Common myeloid progenitor, CD34-positive (primary cell): ENCODE measurements at regions of chr11 and their contacts with region 1.

Region 1: DNA sequence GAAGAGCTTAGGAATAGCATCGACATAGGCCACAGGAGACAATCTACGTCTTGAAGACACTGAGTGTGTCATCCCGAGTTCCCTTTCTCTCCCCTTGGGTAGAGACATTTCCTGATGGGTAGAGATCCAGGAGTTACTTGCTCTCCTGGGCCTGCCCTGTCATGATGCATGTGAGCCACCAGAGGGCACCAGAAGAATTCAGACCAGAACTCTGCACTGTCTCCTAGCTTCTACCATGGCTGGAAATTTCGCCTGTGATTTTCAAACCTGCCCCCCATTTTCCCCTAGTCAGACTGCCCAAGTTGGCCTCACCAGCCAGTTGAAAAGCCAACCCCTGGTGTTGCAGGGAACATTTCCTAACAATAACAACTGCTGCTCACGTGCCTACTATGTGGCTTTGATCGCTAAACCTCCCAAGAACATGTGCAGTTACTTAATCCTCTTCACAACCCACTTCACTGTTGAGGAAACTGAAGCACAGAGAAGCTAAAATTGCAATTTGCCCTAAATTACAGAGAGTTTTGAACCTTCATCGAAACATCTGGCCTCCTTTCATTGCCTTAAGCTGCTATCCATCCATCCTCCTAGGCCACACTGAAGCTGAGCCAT is 47.2 kb downstream of the C11orf58 start:
- DNase-seq: peak; percentile 56 to 76 (median 70)
- H3K4me3 ChIP-seq: no peak overlapping the region
- H3K27ac ChIP-seq: no peak overlapping the region
- H3K4me1 ChIP-seq: peaks cover 0 to 13% (median 10%) of the 10 kb centered on the region in 4 experiments
- H3K27me3 ChIP-seq: no peaks in the 10 kb centered on the region

Region 2: GRCh38 chr11:16737818-16738192 is 47.8 kb before region 1 on chr11:
- CTCF ChIA-PET with region 1: no interaction called
- POLR2A ChIA-PET with region 1: no interaction called
- DNase-seq: no peak
- H3K4me3 ChIP-seq: peak overlapping the region; percentile 60 to 99 (median 94)
- H3K27ac ChIP-seq: peak overlapping the region; percentile 100
- H3K4me1 ChIP-seq: peaks cover 7 to 16% (median 12%) of the 10 kb centered on the region in 4 experiments
- H3K27me3 ChIP-seq: no peaks in the 10 kb centered on the region

Region 3: DNA sequence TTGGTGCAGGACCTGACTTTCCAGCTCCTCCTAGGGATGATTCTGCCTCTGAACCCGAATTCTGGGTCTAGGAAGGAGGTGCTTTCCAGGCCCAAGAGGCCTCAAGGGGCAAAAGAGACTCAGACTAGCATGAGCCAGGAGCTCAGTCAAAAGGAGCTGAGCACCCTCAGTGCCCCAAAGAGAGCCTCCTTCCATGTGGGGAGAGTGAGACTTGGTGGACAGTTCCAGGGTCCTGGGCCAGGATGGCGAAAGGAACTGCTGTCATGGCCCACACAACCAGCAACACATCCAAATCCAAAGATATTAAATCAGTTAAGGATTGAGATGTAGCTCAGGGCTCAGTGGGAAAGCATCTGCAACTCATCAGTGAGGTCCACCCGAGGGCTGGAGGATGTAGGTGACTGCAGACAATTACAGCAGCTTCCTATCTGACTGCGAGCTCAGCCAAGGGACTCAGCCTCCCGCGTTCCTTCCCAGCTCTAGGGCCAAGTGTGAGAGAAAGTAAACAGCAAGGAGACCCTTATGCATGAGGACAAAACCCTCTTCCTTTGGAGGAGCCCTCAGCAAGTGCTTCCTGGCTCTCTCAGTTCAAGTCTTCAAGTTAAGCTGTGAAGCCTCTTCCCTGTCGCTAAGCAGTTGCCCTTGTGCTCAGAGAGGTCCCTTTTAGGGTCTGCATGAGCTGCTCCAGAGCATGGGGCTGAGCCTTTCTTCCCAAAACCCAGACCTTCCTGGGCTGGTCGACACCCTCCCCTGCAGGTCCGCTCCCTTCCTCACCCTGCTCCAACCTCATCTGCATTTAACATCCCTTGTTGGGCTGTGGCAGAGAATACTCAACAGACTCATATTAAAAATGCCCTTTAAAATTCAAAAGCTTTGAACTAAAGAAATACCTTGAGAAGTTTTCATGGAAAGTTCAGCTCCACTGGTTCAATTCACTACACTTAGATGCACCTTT is 11.4 kb before region 1 on chr11:
- CTCF ChIA-PET with region 1: interaction called, 17 read pairs
- POLR2A ChIA-PET with region 1: no interaction called
- DNase-seq: no peak
- H3K4me3 ChIP-seq: no peak overlapping the region
- H3K27ac ChIP-seq: no peak overlapping the region
- H3K4me1 ChIP-seq: peaks cover 0 to under 1% (median under 1%) of the 10 kb centered on the region in 4 experiments
- H3K27me3 ChIP-seq: peaks cover 0 to 4% (median 0%) of the 10 kb centered on the region in 5 experiments

Region 4: DNA sequence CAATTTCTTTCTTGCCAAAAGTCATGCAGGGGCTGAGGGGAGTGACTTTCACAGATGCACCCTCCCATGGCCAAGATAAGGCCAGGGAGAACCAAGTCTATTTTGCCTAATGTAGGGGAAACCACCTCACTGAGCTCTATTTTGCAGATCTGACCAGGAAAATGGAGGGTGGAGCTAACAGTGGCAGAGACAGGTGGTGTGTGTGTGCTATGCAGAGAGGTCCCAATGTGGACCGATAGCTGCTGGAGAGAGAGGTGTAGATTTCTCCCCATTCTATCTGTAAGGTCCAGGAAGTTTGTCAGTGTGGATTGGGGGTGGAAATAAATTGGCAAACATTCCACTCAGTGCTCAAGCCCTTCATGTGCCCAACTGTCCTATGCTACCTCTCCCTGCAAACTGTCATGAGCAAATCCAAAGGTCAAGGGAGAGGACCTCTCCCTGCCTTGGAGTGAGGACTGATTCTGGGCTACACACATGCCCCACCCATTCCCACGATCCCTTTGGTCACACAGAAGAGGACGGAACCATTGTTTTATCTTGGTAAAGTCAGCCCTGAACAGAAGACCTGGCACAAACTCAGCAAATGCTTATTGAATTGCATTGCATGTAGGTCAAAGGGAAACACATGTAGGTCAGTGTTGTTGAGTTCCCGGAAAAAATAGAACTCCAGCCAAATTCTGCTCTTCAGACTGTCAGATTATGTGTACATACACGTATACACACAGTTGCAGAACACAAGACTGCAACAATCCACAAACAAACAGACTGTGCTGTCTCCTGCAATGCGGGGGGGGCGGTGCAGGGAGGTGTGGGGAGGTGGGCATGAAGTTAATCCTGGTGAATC is 18.7 kb after region 1 on chr11:
- CTCF ChIA-PET with region 1: interaction called, 184 read pairs
- POLR2A ChIA-PET with region 1: no interaction called
- DNase-seq: no peak
- H3K4me3 ChIP-seq: no peak overlapping the region
- H3K27ac ChIP-seq: no peak overlapping the region
- H3K4me1 ChIP-seq: peaks cover 6 to 52% (median 27%) of the 10 kb centered on the region in 4 experiments
- H3K27me3 ChIP-seq: no peaks in the 10 kb centered on the region

Region 5: DNA sequence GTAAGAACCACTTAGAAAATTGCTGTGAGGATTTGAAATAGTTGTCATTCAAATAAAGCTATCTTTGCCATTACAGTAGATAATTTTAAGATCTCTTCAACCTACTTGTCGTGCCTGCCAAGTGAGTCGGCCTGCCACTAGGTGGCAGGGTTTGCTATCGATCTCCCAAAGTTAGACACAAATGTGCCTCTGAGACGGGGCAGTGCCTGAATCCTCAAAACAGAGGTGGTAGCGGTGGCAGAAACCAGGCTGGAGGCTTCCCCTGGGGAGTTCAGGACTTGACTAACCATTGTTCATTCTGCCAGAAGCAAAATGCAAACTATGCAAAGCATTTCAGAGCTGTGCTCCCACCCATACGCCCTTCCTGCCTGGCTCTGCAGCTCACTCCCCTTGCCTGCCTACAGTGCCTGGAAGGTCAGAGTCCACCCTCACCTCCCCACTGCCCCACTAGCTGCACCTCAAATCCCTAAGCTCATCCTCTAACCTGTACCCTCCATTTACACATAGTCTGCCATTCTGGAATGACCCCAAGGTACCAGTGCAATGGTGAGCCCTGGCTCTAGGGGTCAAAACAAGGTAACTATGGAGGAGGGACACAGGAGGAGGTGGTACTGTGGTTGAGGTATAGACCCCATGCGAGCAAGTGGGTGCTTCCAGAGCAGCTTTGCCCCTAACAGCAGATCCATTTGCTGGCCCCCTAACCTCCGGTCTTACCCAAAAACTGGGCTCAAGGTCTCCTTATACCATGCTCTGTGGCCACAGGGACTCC is 34.9 kb after region 1 on chr11:
- CTCF ChIA-PET with region 1: interaction called, 184 read pairs
- POLR2A ChIA-PET with region 1: no interaction called
- DNase-seq: peak; percentile 67 to 80 (median 78)
- H3K4me3 ChIP-seq: no peak overlapping the region
- H3K27ac ChIP-seq: no peak overlapping the region
- H3K4me1 ChIP-seq: peaks cover 3 to 16% (median 6%) of the 10 kb centered on the region in 4 experiments
- H3K27me3 ChIP-seq: no peaks in the 10 kb centered on the region

Region 6: DNA sequence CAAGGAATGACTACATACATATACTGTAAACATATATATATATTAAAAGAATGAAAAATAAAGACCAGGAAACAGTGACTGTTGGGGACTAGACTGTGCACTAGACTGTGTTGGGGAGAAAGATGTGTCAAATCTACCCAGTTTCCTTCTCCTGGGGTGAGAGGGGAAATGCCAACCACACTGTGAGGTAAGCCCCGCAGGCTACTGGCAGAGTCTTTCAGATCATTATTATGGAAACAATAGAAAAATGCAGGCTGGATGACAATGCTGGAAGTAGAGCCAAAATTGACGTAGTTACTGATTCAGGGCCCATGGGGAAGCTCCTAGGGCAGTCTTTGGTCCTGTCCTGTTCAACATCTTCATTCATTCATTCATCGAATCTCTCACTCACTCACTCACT is 54.2 kb after region 1 on chr11:
- CTCF ChIA-PET with region 1: no interaction called
- POLR2A ChIA-PET with region 1: no interaction called
- DNase-seq: peak in 2 of 3 donors; percentile 13 to 21
- H3K4me3 ChIP-seq: no peak overlapping the region
- H3K27ac ChIP-seq: no peak overlapping the region
- H3K4me1 ChIP-seq: peaks cover 0 to 3% (median 1%) of the 10 kb centered on the region in 4 experiments
- H3K27me3 ChIP-seq: peaks cover 0 to 2% (median 0%) of the 10 kb centered on the region in 5 experiments

Region 7: DNA sequence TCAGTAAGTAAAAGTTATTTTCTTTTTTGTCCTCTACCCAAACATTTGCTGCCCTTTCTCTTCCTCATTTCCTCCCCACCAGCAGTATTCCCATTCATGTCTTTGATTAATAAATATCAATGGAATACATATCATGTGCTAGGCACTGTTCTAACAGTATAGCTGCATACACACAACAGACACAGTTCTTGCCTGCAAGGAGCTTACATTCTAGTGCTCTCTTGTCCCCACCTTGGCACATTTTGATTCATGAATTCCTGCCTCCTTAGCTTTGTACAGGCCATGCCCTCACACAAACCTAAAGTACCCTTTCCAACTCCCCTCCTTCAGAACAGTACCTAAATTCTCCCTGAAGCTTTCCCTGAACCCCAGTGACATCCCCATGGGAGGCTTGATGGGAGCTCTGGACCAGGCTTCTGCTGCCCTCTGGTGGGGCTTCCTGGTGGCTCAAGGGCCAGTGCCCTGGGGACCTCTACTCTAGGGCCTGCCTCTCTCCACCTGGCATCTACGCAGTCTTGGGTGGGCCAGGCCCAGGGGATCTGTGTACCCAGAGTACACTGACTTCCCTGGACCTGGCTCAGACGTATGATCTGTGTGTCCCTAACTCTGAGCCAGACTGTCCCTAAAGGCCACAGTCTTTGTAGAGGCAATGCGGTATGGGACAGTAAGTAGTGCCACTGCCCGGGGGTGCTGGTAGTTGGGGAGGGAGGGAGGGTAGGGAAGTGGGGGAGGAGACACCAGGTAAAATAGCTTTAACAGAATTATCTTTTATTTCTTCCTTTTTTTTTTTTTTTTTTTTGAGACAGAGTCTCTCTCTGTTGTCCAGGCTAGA is 277.8 kb after region 1 on chr11:
- CTCF ChIA-PET with region 1: interaction called, 48 read pairs
- POLR2A ChIA-PET with region 1: no interaction called
- DNase-seq: peak; percentile 43 to 58 (median 50)
- H3K4me3 ChIP-seq: no peak overlapping the region
- H3K27ac ChIP-seq: no peak overlapping the region
- H3K4me1 ChIP-seq: no peaks in the 10 kb centered on the region
- H3K27me3 ChIP-seq: no peaks in the 10 kb centered on the region

Region 8: GRCh38 chr11:17129003-17129402 is 343.4 kb after region 1 on chr11:
- CTCF ChIA-PET with region 1: no interaction called
- POLR2A ChIA-PET with region 1: no interaction called
- DNase-seq: no peak
- H3K4me3 ChIP-seq: no peak overlapping the region
- H3K27ac ChIP-seq: no peak overlapping the region
- H3K4me1 ChIP-seq: no peaks in the 10 kb centered on the region
- H3K27me3 ChIP-seq: no peaks in the 10 kb centered on the region